WTC11 (cell line): ENCODE measurements at regions of chr11 and their contacts with region 1.

Region 1: GRCh38 chr11:34174412-34175041 is 69.1 kb downstream of the NAT10 start:
- DNase-seq: peak; percentile 92
- ATAC-seq: peak; percentile 95
- H3K4me3 Mint-ChIP-seq: peak overlapping the region; percentile 67
- H3K27ac Mint-ChIP-seq: no peak overlapping the region
- H3K4me1 Mint-ChIP-seq: peaks cover 10% of the 10 kb centered on the region; the same call in 1 of the 2 replicates
- H3K27me3 Mint-ChIP-seq: no peaks in the 10 kb centered on the region
- CTCF ChIP-seq: peak; percentile 67

Region 2: DNA sequence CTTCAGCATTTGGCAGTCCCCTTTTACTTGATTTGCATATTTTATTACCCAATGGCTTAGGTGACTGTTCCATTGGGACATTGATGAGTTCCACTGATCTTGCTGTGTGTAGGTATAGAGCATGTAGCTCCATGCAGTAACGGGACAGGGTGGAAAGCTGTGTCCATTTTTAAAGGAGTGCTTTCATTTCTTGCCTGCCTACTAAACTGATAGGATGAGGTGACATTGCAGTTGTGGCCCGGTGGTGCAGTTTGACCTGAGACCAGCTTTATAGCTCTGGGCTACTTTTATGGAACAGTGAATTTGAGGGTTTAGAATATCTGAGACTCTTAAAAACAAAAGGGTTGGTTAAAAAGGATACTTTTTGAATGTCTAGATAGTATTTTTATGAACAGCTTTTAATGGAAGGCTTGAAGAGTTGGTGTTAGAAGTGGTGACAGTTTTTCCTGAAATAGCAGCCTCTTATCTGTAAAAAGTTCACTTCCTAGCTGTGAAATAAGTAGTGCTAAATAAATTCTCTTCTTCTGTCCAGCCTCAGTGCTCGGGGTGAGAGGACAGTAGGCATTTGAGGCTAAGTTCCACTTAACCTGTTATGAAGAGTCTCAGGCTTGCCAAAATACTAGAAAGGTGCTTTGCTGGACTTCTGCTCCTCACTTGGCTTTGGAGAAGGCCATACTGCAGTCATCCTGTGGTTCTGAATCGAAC is 42.1 kb before region 1 on chr11:
- CTCF ChIA-PET with region 1: no interaction called
- POLR2A ChIA-PET with region 1: no interaction called
- DNase-seq: no peak
- ATAC-seq: no peak
- H3K4me3 Mint-ChIP-seq: no peak overlapping the region
- H3K27ac Mint-ChIP-seq: no peak overlapping the region
- H3K4me1 Mint-ChIP-seq: no peaks in the 10 kb centered on the region
- H3K27me3 Mint-ChIP-seq: no peaks in the 10 kb centered on the region
- CTCF ChIP-seq: no peak

Region 3: GRCh38 chr11:34185926-34186841 is 11.7 kb after region 1 on chr11:
- CTCF ChIA-PET with region 1: interaction called, 111 read pairs
- POLR2A ChIA-PET with region 1: interaction called, 7 read pairs
- DNase-seq: peak; percentile 30
- ATAC-seq: peak; percentile 60
- H3K4me3 Mint-ChIP-seq: peak overlapping the region; percentile 33; the same call in 1 of the 2 replicates
- H3K27ac Mint-ChIP-seq: peak overlapping the region; percentile 68
- H3K4me1 Mint-ChIP-seq: peaks cover 51% of the 10 kb centered on the region
- H3K27me3 Mint-ChIP-seq: no peaks in the 10 kb centered on the region
- CTCF ChIP-seq: no peak

Region 4: GRCh38 chr11:34234086-34234740 is 59.7 kb after region 1 on chr11:
- CTCF ChIA-PET with region 1: interaction called, 30 read pairs
- POLR2A ChIA-PET with region 1: no interaction called
- DNase-seq: peak; percentile 57
- ATAC-seq: peak; percentile 91
- H3K4me3 Mint-ChIP-seq: peak overlapping the region; percentile 20
- H3K27ac Mint-ChIP-seq: peak overlapping the region; percentile 68; the same call in 1 of the 2 replicates
- H3K4me1 Mint-ChIP-seq: peaks cover 36% of the 10 kb centered on the region
- H3K27me3 Mint-ChIP-seq: no peaks in the 10 kb centered on the region
- CTCF ChIP-seq: no peak

Region 5: GRCh38 chr11:34302046-34302921 is 127.8 kb after region 1 on chr11:
- CTCF ChIA-PET with region 1: interaction called, 30 read pairs
- POLR2A ChIA-PET with region 1: no interaction called
- DNase-seq: no peak
- ATAC-seq: no peak
- H3K4me3 Mint-ChIP-seq: no peak overlapping the region
- H3K27ac Mint-ChIP-seq: peak overlapping the region; percentile 50; the same call in 1 of the 2 replicates
- H3K4me1 Mint-ChIP-seq: peaks cover 44% of the 10 kb centered on the region
- H3K27me3 Mint-ChIP-seq: no peaks in the 10 kb centered on the region
- CTCF ChIP-seq: no peak

Region 6: GRCh38 chr11:34351687-34352469 is 177.4 kb after region 1 on chr11:
- CTCF ChIA-PET with region 1: interaction called, 236 read pairs
- POLR2A ChIA-PET with region 1: interaction called, 33 read pairs
- DNase-seq: no peak
- ATAC-seq: no peak
- H3K4me3 Mint-ChIP-seq: no peak overlapping the region
- H3K27ac Mint-ChIP-seq: no peak overlapping the region
- H3K4me1 Mint-ChIP-seq: peaks cover 23% of the 10 kb centered on the region
- H3K27me3 Mint-ChIP-seq: peaks cover 28% of the 10 kb centered on the region
- CTCF ChIP-seq: no peak

Region 7: DNA sequence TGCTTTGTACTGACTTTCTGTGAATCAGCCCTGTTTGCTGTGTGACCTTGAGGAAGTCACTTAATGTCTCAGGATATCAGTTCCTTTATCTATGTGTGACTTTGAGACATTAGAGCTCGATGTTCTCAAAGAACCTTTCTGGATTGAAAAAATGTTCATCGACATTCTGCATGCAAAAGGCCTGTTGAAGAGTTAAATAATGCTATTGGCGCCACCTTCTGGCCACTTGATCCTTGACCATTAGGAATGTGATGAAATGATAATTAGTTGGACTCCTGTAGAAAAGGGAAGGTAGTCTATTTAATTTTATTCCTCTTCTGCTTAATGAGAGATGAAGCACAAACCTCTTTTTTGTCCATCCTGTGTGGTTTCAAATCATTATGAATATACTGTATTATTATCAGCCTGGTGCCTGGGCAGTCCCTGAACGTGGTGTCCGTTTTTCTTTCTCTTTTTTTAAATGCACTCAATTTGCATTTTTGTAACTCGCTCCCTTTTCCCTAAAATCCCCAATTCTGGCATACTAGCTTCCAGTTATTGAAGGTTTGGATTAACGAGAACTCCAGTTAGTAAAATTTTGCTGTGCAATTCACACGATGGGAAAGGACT is 318.4 kb after region 1 on chr11:
- CTCF ChIA-PET with region 1: interaction called, 24 read pairs
- POLR2A ChIA-PET with region 1: no interaction called
- DNase-seq: peak; percentile 57
- ATAC-seq: peak; percentile 50; the same call in 1 of the 2 replicates
- H3K4me3 Mint-ChIP-seq: no peak overlapping the region
- H3K27ac Mint-ChIP-seq: no peak overlapping the region
- H3K4me1 Mint-ChIP-seq: no peaks in the 10 kb centered on the region
- H3K27me3 Mint-ChIP-seq: no peaks in the 10 kb centered on the region
- CTCF ChIP-seq: peak; percentile 47; the same call in 1 of the 2 replicates